GM13977 (cell line): ENCODE measurements at regions of chr12 and their contacts with region 1.

Region 1: GRCh38 chr12:31659087-31659933 is at the start of gene ETFBKMT:
- DNase-seq: peak; percentile 91
- CTCF ChIP-seq: peak; percentile 18

Region 2: DNA sequence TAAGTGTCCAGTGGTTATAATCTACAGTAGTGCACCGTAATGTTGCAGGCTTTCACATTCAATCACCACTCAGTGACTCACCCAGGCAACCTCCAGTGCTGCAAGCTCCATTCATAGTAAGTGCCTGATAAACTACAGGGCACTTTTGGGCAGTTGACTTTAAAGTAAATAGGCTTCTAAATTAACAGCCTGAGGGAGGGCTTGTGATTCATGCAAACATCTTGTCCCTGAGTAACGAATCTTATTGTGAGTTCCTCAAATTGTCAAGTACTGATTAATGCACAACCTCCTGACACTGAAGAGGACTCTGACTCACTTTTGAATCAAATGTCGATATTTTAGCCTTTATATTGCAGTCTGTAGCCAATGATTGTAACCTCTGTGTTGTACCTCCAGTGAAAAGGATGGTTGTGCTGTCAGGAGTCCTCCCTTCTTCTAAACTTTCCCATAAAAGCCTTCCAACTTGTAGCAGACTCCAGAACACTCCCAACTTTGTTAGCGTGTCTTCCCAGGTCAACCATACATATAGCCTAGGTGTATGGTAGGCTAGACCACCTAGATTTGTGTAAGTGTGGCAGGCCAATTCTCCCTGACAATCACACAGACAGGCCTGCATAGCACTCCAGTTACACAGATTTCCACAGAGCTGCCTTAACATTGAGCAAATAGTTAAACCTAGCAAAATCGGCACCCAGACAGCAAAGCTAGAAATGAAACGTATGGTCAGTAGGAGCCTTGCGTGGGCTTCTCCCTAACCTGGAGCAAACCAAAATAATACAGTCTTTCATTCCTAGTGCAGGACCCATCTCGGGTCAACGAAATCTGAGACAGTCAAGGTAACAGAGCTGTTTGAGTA is 392.5 kb after region 1 on chr12:
- in situ Hi-C with region 1: loop called (anchors 25 kb)
- DNase-seq: no peak
- CTCF ChIP-seq: no peak

Region 3: GRCh38 chr12:32679091-32679919 is 1020.0 kb after region 1 on chr12 and contains the start of gene DNM1L:
- in situ Hi-C with region 1: loop called (anchors 25 kb)
- DNase-seq: peak; percentile 95
- CTCF ChIP-seq: no peak